ENCODE measurements at regions of chr5 and their contacts with region 1.

Region 1: GRCh38 chr5:11268891-11269290 is 507.9 kb upstream of the DAP start:
- DNase-seq: no peak
- ATAC-seq: no peak

Region 2: DNA sequence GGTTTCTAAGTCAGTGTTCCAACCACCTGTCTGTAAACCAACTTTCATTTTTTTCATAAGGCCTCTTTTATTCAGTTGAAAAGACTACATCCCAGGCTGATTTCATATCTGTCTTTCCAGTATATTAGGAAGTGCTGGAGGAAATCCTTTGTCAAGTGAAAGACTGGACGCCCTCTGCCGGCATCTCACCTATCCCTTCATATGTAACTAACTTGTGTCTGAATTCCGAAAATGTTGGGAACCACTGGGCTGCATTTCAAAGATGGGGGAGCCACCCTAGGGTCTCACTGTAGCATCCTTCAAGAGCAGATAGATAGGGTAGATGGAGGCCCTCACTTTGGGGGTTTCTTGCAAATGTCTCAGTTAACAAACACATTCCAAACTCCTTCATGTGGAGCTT is 65.5 kb after region 1 on chr5:
- intact Hi-C with region 1: no loop called
- DNase-seq: no peak
- ATAC-seq: no peak

Region 3: GRCh38 chr5:11407556-11408145 is 138.8 kb after region 1 on chr5:
- intact Hi-C with region 1: no loop called
- DNase-seq: no peak
- ATAC-seq: no peak

Region 4: DNA sequence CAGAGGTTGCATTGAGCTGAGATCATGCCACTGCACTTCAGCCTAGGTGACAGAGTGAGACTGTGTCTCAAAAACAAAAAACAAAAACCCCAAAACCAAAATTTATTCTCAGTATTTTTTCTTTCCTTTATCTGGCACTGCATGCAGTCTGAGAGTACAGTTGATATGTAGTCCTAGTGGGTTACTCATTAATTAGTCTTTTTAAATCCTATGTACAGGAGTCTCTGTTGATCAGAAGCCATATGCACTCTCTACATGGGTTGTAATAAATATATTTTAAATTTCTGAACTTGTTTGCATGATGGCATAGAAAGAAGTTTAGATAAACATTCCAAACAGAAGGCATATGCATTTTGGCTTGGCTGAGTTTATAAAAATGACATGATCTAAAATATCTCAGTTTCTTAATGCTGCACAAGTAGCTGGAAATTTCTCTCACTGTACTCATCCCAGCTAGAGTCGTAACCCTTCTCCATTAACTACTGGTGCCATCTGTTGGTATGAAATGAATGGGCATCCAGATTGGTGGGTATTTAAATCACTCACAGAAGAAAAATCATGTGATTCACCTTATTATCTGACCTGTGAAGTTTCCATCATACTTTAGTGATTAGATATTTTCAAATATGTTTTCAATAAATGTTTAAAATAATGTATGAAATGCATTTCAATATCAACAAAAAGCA is 350.6 kb after region 1 on chr5:
- intact Hi-C with region 1: loop called (anchors 5 kb)
- DNase-seq: no peak
- ATAC-seq: peak; percentile 78

Region 5: DNA sequence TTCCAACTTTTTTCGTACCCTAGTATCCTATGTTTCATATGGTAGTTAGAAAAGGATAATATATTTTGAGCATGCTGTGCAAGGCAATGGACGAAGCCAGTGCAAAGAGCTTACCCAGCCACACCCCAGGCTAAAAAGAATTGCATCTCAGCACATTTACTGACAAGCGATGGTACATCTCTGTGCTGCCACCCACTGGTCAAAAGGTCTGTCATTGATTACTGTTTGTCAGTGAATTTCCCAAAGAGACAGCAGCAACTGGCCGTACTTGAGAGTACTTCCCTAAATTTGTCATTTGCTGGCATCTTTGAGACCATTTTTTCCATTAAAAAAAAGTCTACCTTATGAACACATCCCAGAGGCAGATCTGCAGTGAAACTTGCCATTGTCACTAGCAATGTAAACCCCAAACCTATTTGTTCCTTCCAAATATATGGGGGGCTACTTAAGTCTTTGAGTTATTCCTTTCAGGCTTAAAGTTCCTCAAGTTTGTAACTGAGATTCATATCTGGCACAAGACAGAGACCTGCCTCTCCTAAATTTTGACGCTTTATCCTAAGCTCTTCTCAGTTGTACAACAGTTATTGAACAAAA is 451.1 kb after region 1 on chr5:
- intact Hi-C with region 1: loop called (anchors 10 kb)
- DNase-seq: peak; percentile 42
- ATAC-seq: peak; percentile 58

Region 6: GRCh38 chr5:12023614-12024241 is 754.8 kb after region 1 on chr5:
- intact Hi-C with region 1: loop called (anchors 10 kb)
- DNase-seq: no peak
- ATAC-seq: no peak

Measured in Right ventricle myocardium superior (tissue), 1 donor.